ENCODE measurements at regions of chr5 and their contacts with region 1.

Region 1: GRCh38 chr5:66494421-66494820 is 101.8 kb upstream of the MAST4 start:
- DNase-seq: no peak
- ATAC-seq: no peak
- H3K4me3 ChIP-seq: no peak overlapping the region
- H3K27ac ChIP-seq: no peak overlapping the region
- H3K4me1 ChIP-seq: no peaks in the 10 kb centered on the region
- H3K27me3 ChIP-seq: no peaks in the 10 kb centered on the region
- CTCF ChIP-seq: no peak
- POLR2A ChIP-seq: no peak

Region 2: GRCh38 chr5:66426259-66427138 is 67.9 kb before region 1 on chr5:
- in situ Hi-C with region 1: loop called in 1 of 4 experiments (anchors 10 kb)
- intact Hi-C with region 1: no loop called
- DNase-seq: no peak
- ATAC-seq: no peak
- H3K4me3 ChIP-seq: no peak overlapping the region
- H3K27ac ChIP-seq: no peak overlapping the region
- H3K4me1 ChIP-seq: no peaks in the 10 kb centered on the region
- H3K27me3 ChIP-seq: no peaks in the 10 kb centered on the region
- CTCF ChIP-seq: no peak
- POLR2A ChIP-seq: no peak

Region 3: DNA sequence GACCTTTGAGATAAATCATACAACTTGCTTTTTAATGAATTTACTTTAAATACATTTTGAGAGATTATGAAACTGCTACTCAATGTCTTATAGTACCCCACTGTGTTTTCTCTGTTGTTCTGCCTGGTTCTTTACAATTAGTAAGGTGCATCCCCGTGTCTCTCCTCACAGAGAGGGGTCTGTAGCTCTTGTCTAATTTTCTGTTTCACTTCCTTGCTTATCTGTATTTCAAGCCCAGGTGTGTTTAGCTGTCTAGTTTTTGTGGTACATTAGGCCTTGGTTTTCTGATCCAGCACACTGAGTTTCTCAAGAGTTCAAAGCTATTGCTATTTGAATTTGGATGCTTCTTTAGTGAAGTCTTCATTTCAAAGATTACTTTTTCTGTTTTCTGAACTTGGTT is 206.8 kb after region 1 on chr5:
- in situ Hi-C with region 1: no loop called
- intact Hi-C with region 1: no loop called
- DNase-seq: no peak
- ATAC-seq: no peak
- H3K4me3 ChIP-seq: no peak overlapping the region
- H3K27ac ChIP-seq: no peak overlapping the region
- H3K4me1 ChIP-seq: no peaks in the 10 kb centered on the region
- H3K27me3 ChIP-seq: no peaks in the 10 kb centered on the region
- CTCF ChIP-seq: no peak
- POLR2A ChIP-seq: no peak